ENCODE measurements at regions of chr2 and their contacts with region 1.

Region 1: DNA sequence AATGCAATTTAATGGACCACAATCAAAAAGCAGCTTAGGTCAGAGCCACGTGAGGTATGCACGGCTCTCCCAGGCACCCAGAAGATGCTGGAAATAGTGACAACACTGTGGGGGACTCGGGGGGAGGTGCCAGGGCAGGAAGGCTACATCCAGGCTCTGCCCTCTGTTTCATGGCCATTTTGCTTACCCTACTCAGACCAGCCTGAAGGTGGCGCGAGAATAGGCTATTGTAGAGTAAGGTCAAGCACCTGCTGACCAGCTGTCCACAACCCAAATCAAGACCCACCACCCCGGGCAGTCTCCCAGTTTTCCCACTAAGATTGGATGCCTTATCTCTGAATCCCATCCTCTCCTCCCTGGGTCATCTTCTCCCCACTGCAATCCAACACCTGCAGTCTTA is 115.7 kb downstream of the VIT start:
- DNase-seq: peak; percentile 41 to 50 (median 46)
- ATAC-seq: peak; percentile 90
- H3K4me3 ChIP-seq: no peak overlapping the region
- H3K27ac ChIP-seq: no peak overlapping the region
- H3K4me1 ChIP-seq: peaks cover 0 to 7% of the 10 kb centered on the region in 2 experiments; a peak in 1 of 5 replicates
- H3K27me3 ChIP-seq: peaks cover 2 to 27% of the 10 kb centered on the region in 2 experiments; a peak in 3 of 5 replicates
- CTCF ChIP-seq: peak; percentile 50 to 67 (median 52)
- EP300 ChIP-seq: no peak
- POLR2A ChIP-seq: no peak
- RAD21 ChIP-seq: peak in 1 of 2 experiments; percentile 45; a peak in 2 of 4 replicates

Region 2: DNA sequence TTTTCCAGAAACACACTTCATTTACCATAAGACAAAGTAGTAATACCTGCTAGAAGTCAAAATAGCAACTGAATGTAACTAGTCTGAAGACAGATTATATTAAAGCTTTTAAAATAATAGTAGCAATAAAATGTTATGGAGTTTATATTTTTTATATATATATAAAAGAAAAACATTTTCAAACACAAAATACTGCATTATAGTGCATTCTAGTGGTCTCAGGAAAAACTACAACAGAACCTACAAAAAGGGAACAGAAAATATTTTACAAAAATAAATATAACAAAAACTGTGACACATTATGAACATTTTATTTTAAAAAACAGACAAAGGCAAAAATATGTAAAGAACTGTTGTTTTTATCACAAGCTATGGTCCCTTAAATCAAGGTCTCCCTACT is 106.1 kb after region 1 on chr2:
- CTCF ChIA-PET with region 1: no interaction called
- POLR2A ChIA-PET with region 1: no interaction called
- in situ Hi-C with region 1: no loop called
- intact Hi-C with region 1: loop called (anchors 10 kb)
- DNase-seq: no peak
- ATAC-seq: no peak
- H3K4me3 ChIP-seq: no peak overlapping the region
- H3K27ac ChIP-seq: no peak overlapping the region
- H3K4me1 ChIP-seq: no peaks in the 10 kb centered on the region
- H3K27me3 ChIP-seq: no peaks in the 10 kb centered on the region
- CTCF ChIP-seq: peak in 2 of 3 experiments; percentile 12 to 41; a peak in 2 of 6 replicates
- EP300 ChIP-seq: no peak
- POLR2A ChIP-seq: no peak
- RAD21 ChIP-seq: no peak